CD8-positive, alpha-beta T cell (primary cell): ENCODE measurements at regions of chr2 and their contacts with region 1.

Region 1: DNA sequence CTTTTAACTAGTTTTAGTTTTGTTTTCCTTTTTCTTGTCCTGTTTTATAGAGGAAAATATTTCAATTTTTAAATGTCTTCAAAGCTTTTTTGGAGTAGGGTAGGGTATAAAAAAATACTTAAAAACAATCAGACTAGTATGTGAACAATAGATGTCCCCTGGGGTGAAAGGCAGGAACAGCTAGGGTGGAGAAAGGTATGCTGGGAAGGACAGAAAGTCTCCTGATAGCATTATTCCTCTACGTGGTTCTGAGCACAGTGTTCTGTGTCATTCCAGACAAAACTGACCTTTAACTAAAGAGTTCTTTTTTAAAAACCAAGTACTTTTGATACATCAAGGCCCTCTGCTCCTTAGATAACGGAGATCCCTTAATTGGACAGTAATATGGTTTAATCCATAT is 32.1 kb upstream of the B3GNT2 start:
- DNase-seq: no peak
- ATAC-seq: no peak
- H3K4me3 ChIP-seq: no peak overlapping the region
- H3K4me3 Mint-ChIP-seq: no peak overlapping the region
- H3K27ac ChIP-seq: no peak overlapping the region
- H3K27ac Mint-ChIP-seq: no peak overlapping the region
- H3K4me1 ChIP-seq: no peaks in the 10 kb centered on the region
- H3K4me1 Mint-ChIP-seq: no peaks in the 10 kb centered on the region
- H3K27me3 ChIP-seq: no peaks in the 10 kb centered on the region
- H3K27me3 Mint-ChIP-seq: no peaks in the 10 kb centered on the region
- CTCF ChIP-seq: no peak

Region 2: DNA sequence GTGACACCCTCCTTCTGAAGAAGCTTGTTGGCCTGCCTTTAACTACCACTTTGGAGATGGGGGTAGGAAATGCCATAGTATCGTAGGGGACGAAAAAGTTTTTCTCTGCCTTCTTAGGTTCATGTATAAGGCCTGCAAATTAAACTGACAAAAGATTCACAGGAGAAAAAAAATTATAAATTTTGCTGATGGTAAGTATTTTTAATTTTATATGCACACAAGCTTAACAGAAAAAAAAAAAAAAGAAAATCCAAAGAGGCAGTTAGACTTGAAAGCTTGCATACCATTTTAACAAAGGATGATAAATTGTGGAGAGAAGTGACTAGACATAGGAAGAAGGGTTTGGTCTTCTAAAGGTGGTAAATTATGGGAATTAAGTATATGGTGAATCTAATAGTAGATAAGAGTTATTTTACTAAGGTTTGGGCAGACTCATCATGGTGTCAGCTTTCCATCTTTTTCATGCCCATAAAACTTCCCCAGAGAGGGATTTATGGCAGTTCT is 30.5 kb before region 1 on chr2:
- CTCF ChIA-PET with region 1: no interaction called
- POLR2A ChIA-PET with region 1: no interaction called
- intact Hi-C with region 1: loop called in 1 of 2 experiments (anchors 2 kb)
- DNase-seq: no peak
- ATAC-seq: no peak
- H3K4me3 ChIP-seq: no peak overlapping the region
- H3K4me3 Mint-ChIP-seq: no peak overlapping the region
- H3K27ac ChIP-seq: no peak overlapping the region
- H3K27ac Mint-ChIP-seq: no peak overlapping the region
- H3K4me1 ChIP-seq: no peaks in the 10 kb centered on the region
- H3K4me1 Mint-ChIP-seq: peaks cover 6% of the 10 kb centered on the region
- H3K27me3 ChIP-seq: no peaks in the 10 kb centered on the region
- H3K27me3 Mint-ChIP-seq: no peaks in the 10 kb centered on the region
- CTCF ChIP-seq: no peak